SK-N-SH (cell line): ENCODE measurements at regions of chr12 and their contacts with region 1.

Region 1: GRCh38 chr12:116689979-116690744 is 47.7 kb downstream of the SPRING1 start:
- DNase-seq: peak; percentile 43
- H3K4me3 ChIP-seq: no peak overlapping the region
- H3K27ac ChIP-seq: no peak overlapping the region
- H3K4me1 ChIP-seq: peaks cover 0 to 22% of the 10 kb centered on the region in 2 experiments; a peak in 3 of 4 replicates
- H3K27me3 ChIP-seq: peaks cover 6% of the 10 kb centered on the region; the same call in 1 of the 2 replicates
- CTCF ChIP-seq: no peak
- EP300 ChIP-seq: no peak
- RAD21 ChIP-seq: no peak

Region 2: DNA sequence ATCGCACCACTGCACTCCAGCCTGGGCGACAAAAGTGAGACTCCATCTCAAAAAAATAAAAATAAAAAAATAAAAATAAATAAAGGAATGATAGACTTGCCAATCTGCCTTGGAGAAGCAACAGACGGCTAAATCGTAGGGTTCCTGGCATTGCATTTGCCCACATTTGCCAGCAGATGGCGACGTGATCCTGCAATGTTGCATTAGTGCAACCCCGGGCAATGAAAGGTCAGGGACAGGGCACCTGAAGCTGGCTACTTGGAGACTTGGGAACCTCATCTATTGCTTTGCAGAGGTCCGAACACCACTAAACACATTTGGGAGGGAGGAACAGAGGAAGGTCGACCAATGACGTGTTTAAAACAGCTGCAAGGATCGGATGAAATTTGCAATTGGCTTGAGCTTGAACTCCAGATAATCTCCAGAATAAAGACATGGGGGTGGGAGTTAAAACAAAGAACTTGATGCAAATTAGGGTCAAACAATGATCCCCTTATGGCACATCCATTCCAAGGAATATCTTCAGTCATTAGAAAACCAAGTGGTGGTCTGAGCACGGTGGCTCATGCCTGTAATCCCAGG is 13.1 kb after region 1 on chr12:
- CTCF ChIA-PET with region 1: interaction called, 48 read pairs
- POLR2A ChIA-PET with region 1: no interaction called
- DNase-seq: peak; percentile 73
- H3K4me3 ChIP-seq: peak overlapping the region in 1 of 2 experiments; percentile 11; a peak in 1 of 4 replicates
- H3K27ac ChIP-seq: no peak overlapping the region
- H3K4me1 ChIP-seq: no peaks in the 10 kb centered on the region; a peak in 1 of 4 replicates
- H3K27me3 ChIP-seq: no peaks in the 10 kb centered on the region
- CTCF ChIP-seq: peak; percentile 93
- EP300 ChIP-seq: no peak
- RAD21 ChIP-seq: peak; percentile 82

Region 3: GRCh38 chr12:116784238-116784612 is 94.1 kb after region 1 on chr12:
- CTCF ChIA-PET with region 1: no interaction called
- POLR2A ChIA-PET with region 1: no interaction called
- DNase-seq: peak; percentile 25
- H3K4me3 ChIP-seq: no peak overlapping the region
- H3K27ac ChIP-seq: no peak overlapping the region
- H3K4me1 ChIP-seq: no peaks in the 10 kb centered on the region
- H3K27me3 ChIP-seq: no peaks in the 10 kb centered on the region
- CTCF ChIP-seq: no peak
- EP300 ChIP-seq: no peak
- RAD21 ChIP-seq: no peak